GM12878 (cell line): ENCODE measurements at regions of chr14 and their contacts with region 1.

Region 1: DNA sequence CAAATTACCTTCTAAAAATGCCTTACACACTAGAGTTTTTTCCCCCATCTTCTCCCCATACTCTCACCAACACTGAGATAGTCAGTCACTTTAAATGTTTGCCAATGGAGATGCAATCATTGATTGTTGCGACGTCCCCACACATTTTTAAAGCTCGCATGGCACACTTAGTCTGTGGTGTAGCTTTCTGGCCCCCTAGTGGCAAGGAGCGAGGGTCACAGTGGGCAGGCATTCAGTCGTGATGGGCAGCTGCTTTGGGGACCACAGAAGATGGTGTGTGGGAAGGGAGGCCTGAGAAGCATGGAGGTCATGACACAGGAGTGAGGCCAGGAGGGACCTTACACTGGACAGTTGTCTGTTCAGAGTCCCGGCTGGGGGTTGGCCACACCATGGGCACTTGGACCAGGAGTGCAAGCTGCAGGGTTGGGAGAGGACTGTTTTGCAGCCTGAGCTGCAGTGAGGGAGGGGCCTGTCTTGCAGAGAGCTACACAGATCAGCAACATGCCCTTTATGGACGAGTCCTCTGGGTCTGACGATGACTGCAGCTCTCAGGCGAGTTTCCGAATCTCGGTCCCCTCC is 28.7 kb downstream of the PIGH start:
- DNase-seq: no peak
- ATAC-seq: peak; percentile 98
- H3K4me3 ChIP-seq: no peak overlapping the region
- H3K27ac ChIP-seq: no peak overlapping the region
- H3K4me1 ChIP-seq: no peaks in the 10 kb centered on the region
- H3K27me3 ChIP-seq: no peaks in the 10 kb centered on the region
- CTCF ChIP-seq: peak; percentile 91 to 96 (median 96); a peak in 5 of 6 replicates
- EP300 ChIP-seq: no peak
- POLR2A ChIP-seq: no peak
- RAD21 ChIP-seq: peak; percentile 92

Region 2: GRCh38 chr14:66359500-66359899 is 1211.9 kb before region 1 on chr14:
- CTCF ChIA-PET with region 1: interaction called, 10 read pairs
- POLR2A ChIA-PET with region 1: no interaction called
- RAD21 ChIA-PET with region 1: no interaction called
- SMC1A ChIA-PET with region 1: no interaction called
- in situ Hi-C with region 1: no loop called
- intact Hi-C with region 1: no loop called
- DNase-seq: peak; percentile 15
- ATAC-seq: peak; percentile 24; the same call in 2 of the 3 replicates
- H3K4me3 ChIP-seq: no peak overlapping the region
- H3K27ac ChIP-seq: no peak overlapping the region
- H3K4me1 ChIP-seq: no peaks in the 10 kb centered on the region
- H3K27me3 ChIP-seq: no peaks in the 10 kb centered on the region
- CTCF ChIP-seq: peak; percentile 21 to 66 (median 53); a peak in 5 of 6 replicates
- EP300 ChIP-seq: no peak
- POLR2A ChIP-seq: no peak
- RAD21 ChIP-seq: peak; percentile 97

Region 3: GRCh38 chr14:67420102-67420830 is 151.1 kb before region 1 on chr14:
- CTCF ChIA-PET with region 1: interaction called, 583 read pairs
- POLR2A ChIA-PET with region 1: no interaction called
- RAD21 ChIA-PET with region 1: interaction called, 176 read pairs
- SMC1A ChIA-PET with region 1: interaction called, 185 read pairs
- in situ Hi-C with region 1: loop called (anchors 5 kb)
- intact Hi-C with region 1: no loop called
- DNase-seq: no peak
- ATAC-seq: peak; percentile 91
- H3K4me3 ChIP-seq: no peak overlapping the region
- H3K27ac ChIP-seq: no peak overlapping the region
- H3K4me1 ChIP-seq: no peaks in the 10 kb centered on the region
- H3K27me3 ChIP-seq: peaks cover 0 to 4% of the 10 kb centered on the region in 2 experiments; a peak in 2 of 4 replicates
- CTCF ChIP-seq: peak; percentile 63 to 80 (median 69)
- EP300 ChIP-seq: no peak
- POLR2A ChIP-seq: no peak
- RAD21 ChIP-seq: peak; percentile 46

Region 4: DNA sequence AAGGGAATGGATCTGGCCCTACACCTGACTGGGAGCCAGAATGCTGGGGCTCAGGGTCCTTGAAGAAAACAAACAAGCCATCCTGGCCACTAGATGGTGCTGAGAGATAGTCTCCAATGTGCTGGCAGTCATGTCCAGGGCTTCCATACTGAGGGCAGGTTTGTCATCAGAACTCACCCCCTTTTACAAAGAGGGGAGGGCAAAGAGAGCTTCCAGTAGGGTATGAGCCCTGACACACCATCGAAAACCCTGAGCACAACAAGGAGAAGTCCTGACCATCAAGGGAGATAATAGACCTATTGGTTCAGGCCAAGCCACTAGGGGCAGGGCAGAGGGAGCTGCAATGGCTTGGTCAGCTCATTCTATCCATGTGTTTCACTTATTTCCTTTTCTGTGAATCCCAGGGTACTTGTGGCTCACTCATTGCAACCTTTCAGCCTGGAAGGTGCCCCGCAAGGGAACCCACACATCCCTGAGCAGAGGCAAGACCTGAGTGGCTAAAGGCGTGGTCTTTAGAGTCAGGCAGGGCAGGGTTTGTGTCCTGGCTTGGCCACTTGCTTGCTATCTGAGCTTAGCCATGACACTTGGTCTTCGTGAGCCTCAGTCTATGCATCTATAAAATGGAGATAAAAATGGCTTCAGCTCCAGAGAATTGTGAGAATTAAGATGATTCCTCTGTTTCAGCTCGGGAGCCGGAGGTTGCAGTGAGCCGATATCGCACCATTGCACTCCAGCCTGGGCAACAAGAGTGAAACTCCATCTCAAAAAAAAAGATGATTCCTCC is 44.5 kb before region 1 on chr14:
- CTCF ChIA-PET with region 1: interaction called, 106 read pairs
- POLR2A ChIA-PET with region 1: interaction called, 3 read pairs
- RAD21 ChIA-PET with region 1: interaction called, 42 read pairs
- SMC1A ChIA-PET with region 1: interaction called, 54 read pairs
- in situ Hi-C with region 1: no loop called
- intact Hi-C with region 1: loop called (anchors 1 kb)
- DNase-seq: peak; percentile 13
- ATAC-seq: peak; percentile 96
- H3K4me3 ChIP-seq: no peak overlapping the region
- H3K27ac ChIP-seq: no peak overlapping the region
- H3K4me1 ChIP-seq: no peaks in the 10 kb centered on the region
- H3K27me3 ChIP-seq: peaks cover 0 to 9% of the 10 kb centered on the region in 2 experiments; a peak in 1 of 4 replicates
- CTCF ChIP-seq: peak; percentile 53 to 82 (median 62)
- EP300 ChIP-seq: no peak
- POLR2A ChIP-seq: no peak
- RAD21 ChIP-seq: peak; percentile 68

Region 5: DNA sequence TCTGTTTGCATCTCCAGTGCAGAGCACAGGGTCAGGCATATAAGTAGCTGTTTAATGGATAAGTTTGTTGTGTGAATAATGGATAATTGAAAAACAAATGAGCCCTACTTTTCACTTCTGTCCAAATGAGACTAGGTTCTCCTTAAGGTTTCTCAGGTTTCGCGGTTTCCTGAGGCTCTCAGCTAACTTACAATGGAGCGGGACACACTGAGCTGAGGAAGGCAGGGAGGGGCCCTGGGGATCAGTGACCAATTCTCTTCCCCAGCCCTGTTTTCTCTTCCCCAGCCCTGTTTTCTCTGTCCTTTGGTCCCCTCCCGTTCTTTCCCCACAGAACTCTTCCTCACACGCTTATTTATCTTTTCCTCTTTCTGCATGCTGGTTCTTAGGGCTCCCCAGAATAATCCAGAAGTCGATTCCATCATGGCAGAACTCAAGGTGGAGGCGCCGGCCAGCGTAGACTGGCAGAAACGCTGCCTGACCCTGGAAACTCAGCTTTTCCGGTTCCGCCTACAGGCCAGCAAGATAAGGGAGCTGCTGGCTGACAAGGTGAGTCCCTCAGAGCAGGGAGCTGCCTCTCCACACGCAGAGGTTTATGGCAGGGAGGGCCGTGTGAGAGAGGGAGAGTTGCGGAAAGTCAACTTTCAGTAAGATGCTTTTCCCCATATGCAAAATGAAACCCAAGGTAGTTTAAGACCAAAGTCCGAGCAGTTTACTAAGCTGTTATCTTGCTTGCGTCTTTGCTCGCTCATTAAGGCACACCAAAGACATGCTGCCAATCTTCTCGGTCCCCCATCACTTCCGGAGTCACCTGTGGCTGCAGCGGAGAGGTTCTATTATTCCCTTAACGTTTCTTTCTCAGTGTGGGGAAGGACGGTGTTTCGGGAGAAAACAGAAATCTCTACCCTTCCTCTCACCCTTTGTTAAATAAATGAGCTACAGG is 29.6 kb before region 1 on chr14:
- CTCF ChIA-PET with region 1: interaction called, 10 read pairs
- POLR2A ChIA-PET with region 1: no interaction called
- RAD21 ChIA-PET with region 1: no interaction called
- SMC1A ChIA-PET with region 1: interaction called, 9 read pairs
- in situ Hi-C with region 1: no loop called
- intact Hi-C with region 1: no loop called
- DNase-seq: no peak
- ATAC-seq: peak; percentile 79
- H3K4me3 ChIP-seq: peak overlapping the region; percentile 63; the same call in 1 of the 2 replicates
- H3K27ac ChIP-seq: no peak overlapping the region
- H3K4me1 ChIP-seq: peaks cover 7% of the 10 kb centered on the region; the same call in 1 of the 2 replicates
- H3K27me3 ChIP-seq: peaks cover 0 to 2% of the 10 kb centered on the region in 2 experiments; a peak in 3 of 4 replicates
- CTCF ChIP-seq: no peak
- EP300 ChIP-seq: no peak
- POLR2A ChIP-seq: peak; percentile 44; the same call in 1 of the 2 replicates
- RAD21 ChIP-seq: no peak

Region 6: DNA sequence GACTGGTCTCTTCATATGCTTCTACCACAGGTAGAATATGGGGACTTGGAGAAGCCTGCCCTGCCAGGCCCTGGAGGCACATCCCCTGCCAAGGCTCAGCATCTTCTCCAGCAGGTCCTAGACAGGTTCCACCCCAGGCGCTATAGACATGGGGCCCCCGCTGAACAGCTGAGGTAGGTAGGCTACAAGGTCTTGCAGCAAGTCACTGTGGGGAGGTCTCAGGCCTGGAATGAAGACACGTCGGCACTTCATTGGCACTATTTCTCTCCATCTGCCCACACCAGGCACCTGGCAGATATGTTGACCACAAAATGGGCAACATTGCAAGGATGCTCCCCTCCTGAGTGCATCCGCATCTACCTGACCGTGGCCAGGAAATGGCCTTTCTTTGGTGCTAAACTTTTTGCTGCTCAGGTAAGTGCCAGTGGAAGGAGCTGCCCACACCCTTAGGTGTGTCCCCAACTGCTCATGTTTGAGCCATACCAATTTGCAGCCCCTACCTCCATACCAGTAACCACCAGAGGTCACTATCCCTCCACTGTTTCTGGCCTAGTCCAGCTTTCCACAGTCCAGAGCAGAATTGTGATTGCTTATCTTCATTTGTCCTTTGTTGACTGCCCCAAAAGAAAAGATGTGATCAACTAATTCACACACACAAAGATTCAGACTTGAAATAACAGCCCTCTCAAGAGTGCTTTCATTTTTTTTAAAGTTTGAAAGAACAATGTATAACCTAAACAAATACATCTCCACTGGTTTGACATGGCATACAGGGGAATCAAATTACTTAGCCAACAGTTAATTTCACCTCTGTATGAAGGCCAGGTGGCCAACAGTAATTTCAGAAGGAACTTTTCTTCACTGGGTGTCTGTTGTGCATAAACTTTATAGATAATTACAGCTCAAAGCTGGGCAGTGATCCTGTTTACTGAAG is 12.6 kb after region 1 on chr14:
- CTCF ChIA-PET with region 1: interaction called, 61 read pairs
- POLR2A ChIA-PET with region 1: no interaction called
- RAD21 ChIA-PET with region 1: interaction called, 6 read pairs
- SMC1A ChIA-PET with region 1: interaction called, 13 read pairs
- in situ Hi-C with region 1: no loop called
- intact Hi-C with region 1: no loop called
- DNase-seq: no peak
- ATAC-seq: peak; percentile 98
- H3K4me3 ChIP-seq: no peak overlapping the region
- H3K27ac ChIP-seq: no peak overlapping the region
- H3K4me1 ChIP-seq: no peaks in the 10 kb centered on the region
- H3K27me3 ChIP-seq: no peaks in the 10 kb centered on the region
- CTCF ChIP-seq: peak; percentile 77 to 83 (median 80)
- EP300 ChIP-seq: no peak
- POLR2A ChIP-seq: no peak
- RAD21 ChIP-seq: peak; percentile 96

Region 7: DNA sequence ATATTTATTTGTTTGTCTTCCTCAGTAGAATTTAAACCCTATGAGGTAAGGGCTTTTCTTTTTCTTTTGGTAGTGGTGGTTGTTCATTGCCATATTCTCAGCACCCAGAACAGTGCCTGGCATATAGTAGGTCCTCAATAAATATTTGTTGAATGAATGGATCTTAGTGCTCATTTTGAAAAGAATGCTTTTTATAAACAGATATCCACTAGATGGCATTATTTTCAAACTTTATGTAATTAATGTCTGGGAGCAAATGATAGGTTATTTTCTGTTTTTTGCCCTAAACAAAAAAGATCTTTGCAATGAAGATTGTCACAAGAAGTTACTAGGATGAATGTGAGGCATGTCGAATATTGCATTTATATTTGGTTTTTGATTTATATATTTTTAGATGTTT is 312.4 kb after region 1 on chr14:
- CTCF ChIA-PET with region 1: no interaction called
- POLR2A ChIA-PET with region 1: no interaction called
- RAD21 ChIA-PET with region 1: no interaction called
- SMC1A ChIA-PET with region 1: no interaction called
- in situ Hi-C with region 1: no loop called
- intact Hi-C with region 1: no loop called
- DNase-seq: no peak
- ATAC-seq: no peak
- H3K4me3 ChIP-seq: no peak overlapping the region
- H3K27ac ChIP-seq: no peak overlapping the region
- H3K4me1 ChIP-seq: peaks cover 17% of the 10 kb centered on the region
- H3K27me3 ChIP-seq: no peaks in the 10 kb centered on the region
- CTCF ChIP-seq: peak in 1 of 3 experiments; percentile 7; a peak in 1 of 6 replicates
- EP300 ChIP-seq: no peak
- POLR2A ChIP-seq: no peak
- RAD21 ChIP-seq: no peak